AG04450 (cell line): ENCODE measurements at regions of chr10 and their contacts with region 1.

Region 1: DNA sequence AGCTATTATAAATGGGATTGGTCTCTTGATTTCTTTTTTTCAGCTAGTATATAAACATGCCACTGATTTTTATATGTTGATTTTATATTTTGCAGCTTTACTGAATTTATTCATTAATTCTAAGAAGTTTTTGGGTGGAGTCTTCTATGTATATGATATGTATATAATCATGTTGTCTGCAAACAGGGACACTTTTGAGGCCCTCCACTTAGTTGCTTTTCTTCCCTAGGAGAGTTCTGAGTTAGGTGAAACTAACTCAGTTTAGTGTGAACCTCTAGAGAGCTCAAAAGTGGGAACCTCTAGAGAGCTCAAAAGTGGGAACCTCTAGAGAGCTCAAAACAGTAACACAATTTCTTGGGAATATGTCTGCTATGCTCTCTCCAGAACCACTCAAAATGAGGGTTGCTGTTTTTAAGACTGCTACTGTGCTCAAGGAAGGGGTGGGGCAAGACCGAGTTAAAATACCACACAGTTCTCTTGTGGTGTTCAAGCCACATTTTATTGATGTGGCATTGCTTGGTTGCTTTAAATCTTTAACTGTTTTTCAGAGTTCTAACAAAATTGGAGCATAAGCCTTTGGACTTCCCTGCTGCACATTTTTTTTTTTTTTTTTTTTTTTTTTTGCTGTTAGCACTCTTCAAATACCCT is 13.2 kb downstream of the CCDC7 start:
- DNase-seq: no peak
- H3K4me3 ChIP-seq: no peak overlapping the region
- H3K27ac ChIP-seq: no peak overlapping the region
- H3K27me3 ChIP-seq: no peaks in the 10 kb centered on the region
- CTCF ChIP-seq: no peak

Region 2: GRCh38 chr10:32388258-32389027 is 70.7 kb before region 1 on chr10:
- CTCF ChIA-PET with region 1: no interaction called
- POLR2A ChIA-PET with region 1: interaction called, 13 read pairs
- DNase-seq: no peak
- H3K4me3 ChIP-seq: no peak overlapping the region
- H3K27ac ChIP-seq: no peak overlapping the region
- H3K27me3 ChIP-seq: no peaks in the 10 kb centered on the region
- CTCF ChIP-seq: no peak